Activated T-helper 2 cell treated with anti-CD3 and anti-CD28 coated beads, Interferon-gamma antibody, Interleukin-2, Interleukin-4, amounts not matched to agents 10 μg/mL and 5 μg/mL and 100 μg/mL, durations not matched to agents 14 hours and 24 hours and 36 hours (primary cell): ENCODE measurements at regions of chr4 and their contacts with region 1.

Region 1: DNA sequence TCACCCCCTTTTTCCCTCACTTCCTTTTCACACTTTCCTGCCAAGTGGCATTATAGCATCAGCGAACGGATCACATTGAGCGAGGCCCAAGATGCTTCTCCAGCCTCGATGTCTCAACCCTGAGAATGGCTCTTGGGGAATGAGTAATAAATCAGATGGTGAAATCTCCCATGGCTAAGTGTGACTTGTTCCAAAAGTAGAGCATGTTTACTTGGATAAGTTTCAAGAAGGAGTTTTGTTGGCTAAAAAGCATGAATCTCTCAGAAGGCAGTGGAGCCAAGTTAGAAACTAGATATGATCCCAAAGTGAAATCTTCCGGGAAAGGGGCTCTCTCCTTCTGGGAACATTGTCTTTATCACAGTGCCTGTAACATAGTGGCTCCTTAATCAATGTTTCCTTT is 316.3 kb downstream of the CAMK2D start:
- DNase-seq: no peak
- H3K4me3 Mint-ChIP-seq: no peak overlapping the region
- H3K27ac Mint-ChIP-seq: peak overlapping the region; percentile 80
- H3K4me1 Mint-ChIP-seq: peaks cover 25% of the 10 kb centered on the region
- H3K27me3 Mint-ChIP-seq: no peaks in the 10 kb centered on the region

Region 2: GRCh38 chr4:113468165-113469022 is 23.1 kb after region 1 on chr4:
- intact Hi-C with region 1: loop called (anchors 1 kb)
- DNase-seq: no peak
- H3K4me3 Mint-ChIP-seq: no peak overlapping the region
- H3K27ac Mint-ChIP-seq: peak overlapping the region; percentile 65
- H3K4me1 Mint-ChIP-seq: peaks cover 23% of the 10 kb centered on the region
- H3K27me3 Mint-ChIP-seq: no peaks in the 10 kb centered on the region